ENCODE measurements at regions of chr6 and their contacts with region 1.

Region 1: DNA sequence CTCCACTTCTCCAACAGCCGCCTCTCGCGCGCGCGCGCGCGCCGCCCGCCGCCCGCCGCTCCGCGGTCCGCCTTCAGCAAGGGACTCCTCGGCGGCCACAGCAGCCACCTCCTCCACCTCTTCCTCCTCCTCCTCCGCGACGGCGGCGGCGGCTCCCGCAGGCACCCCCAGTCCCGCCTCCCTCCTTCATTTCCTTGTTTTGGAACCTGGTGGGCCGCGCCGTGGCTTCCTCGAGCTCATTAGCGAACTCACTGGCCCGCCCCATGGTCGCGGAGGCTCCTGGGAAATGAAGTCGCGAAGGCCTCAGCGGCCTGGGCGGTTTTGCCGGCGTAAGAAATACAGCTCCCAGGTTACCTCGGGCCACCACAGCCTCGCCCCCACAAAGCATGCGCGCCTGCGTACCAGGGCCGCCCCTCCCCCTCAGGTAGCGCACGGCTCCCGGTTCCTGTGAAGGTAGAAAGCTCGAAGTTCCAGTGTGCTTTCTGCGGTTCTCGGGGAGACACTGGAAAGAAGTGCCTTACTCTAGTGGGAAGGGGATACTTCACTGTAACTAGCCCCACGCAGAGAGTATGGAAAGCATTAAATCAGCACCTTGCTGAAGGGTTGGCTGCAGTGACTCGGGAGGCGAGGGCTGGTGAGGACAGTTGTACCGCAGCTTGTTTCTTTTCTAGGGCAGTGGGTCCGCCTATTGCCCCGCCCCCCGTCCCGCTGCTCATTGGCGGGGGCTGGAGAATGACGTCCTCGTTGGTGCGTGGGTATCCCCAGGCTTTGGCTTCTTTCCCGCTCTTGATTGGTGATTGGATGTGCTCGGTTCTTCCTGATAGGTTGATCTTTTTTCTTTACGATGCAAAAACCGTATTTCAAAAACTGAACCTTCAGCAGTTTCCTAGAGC is at the start of gene CDK19:
- DNase-seq: peak; percentile 94 to 99 (median 99)
- ATAC-seq: peak; percentile 87
- H3K4me3 ChIP-seq: peak within 1 kb of the TSS; percentile 97
- H3K4me3 Mint-ChIP-seq: peak within 1 kb of the TSS; percentile 94 to 100 (median 98)
- H3K27ac ChIP-seq: peak within 1 kb of the TSS; percentile 89
- H3K27ac Mint-ChIP-seq: peak within 1 kb of the TSS; percentile 89 to 100 (median 99)
- H3K4me1 ChIP-seq: peaks cover 11 to 15% of the 10 kb centered on the region in 2 donors
- H3K4me1 Mint-ChIP-seq: peaks cover 14 to 46% (median 26%) of the 10 kb centered on the region in 7 donors
- H3K27me3 ChIP-seq: no peaks in the 10 kb centered on the region
- H3K27me3 Mint-ChIP-seq: no peaks in the 10 kb centered on the region
- total RNA-seq, gene CDK19: 11.3 to 24.4 (median 21.0) TPM

Region 2: GRCh38 chr6:108848116-108848868 is 1967.2 kb before region 1 on chr6 and contains the start of gene ARMC2:
- CTCF ChIA-PET with region 1: no interaction called
- POLR2A ChIA-PET with region 1: no interaction called
- intact Hi-C with region 1: loop called in 1 of 2 experiments (anchors 5 kb)
- DNase-seq: peak; percentile 72 to 95 (median 79)
- ATAC-seq: peak; percentile 94
- H3K4me3 ChIP-seq: peak within 1 kb of the TSS; percentile 90
- H3K4me3 Mint-ChIP-seq: peak within 1 kb of the TSS; percentile 75 to 93 (median 88)
- H3K27ac ChIP-seq: peak within 1 kb of the TSS; percentile 69
- H3K27ac Mint-ChIP-seq: peak within 1 kb of the TSS; percentile 72 to 93 (median 85)
- H3K4me1 ChIP-seq: peaks cover 6 to 13% of the 10 kb centered on the region in 2 donors
- H3K4me1 Mint-ChIP-seq: peaks cover 11 to 39% (median 29%) of the 10 kb centered on the region in 7 donors
- H3K27me3 ChIP-seq: no peaks in the 10 kb centered on the region
- H3K27me3 Mint-ChIP-seq: peaks cover 0 to 36% (median 0%) of the 10 kb centered on the region in 5 donors
- total RNA-seq, gene ARMC2: 6.2 to 12.7 (median 7.9) TPM

Region 3: DNA sequence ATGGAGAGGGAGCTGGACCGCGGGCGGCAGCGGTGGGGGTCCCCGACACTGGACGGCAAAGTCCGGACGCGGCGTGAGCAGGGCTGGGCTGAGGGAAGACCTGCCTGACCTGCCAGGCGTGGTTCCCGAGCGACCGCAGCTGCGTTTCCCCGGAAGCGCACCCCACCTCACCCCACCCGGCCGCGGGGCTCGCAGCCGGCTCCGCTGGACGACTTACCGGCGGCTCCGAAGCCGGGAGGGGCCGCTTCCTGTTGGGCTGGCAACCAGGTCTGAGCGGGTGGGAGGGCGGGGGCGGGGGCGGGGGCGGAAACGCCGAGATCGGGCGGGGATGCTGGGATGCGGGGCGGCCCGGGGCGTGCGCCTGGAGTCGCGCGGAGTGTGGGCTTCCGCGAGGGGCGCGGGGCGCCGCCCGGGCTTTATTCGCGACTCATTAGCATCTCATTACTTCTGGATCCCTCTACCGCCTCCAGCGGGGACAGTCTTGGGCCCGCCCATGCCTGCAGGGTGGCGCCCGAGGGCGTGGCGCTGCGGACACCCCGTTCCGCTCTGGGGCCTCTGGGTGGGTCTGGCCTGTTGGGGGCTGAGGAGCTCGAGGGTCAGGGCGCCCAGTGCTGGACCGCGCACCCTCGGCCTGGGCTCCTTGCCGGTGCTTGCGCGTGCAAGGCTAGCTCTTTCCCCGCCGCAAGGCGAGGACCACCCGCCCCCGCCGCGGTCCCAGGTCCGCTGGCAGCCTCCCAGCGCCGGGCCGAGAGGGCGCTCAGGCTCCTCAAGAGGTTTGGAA is 1359.8 kb before region 1 on chr6 and contains the start of gene MICAL1:
- CTCF ChIA-PET with region 1: no interaction called
- POLR2A ChIA-PET with region 1: no interaction called
- intact Hi-C with region 1: loop called in 1 of 2 experiments (anchors 10 kb)
- DNase-seq: peak; percentile 55 to 79 (median 72)
- ATAC-seq: peak; percentile 82
- H3K4me3 ChIP-seq: peak within 1 kb of the TSS; percentile 81
- H3K4me3 Mint-ChIP-seq: peak within 1 kb of the TSS; percentile 95 to 99 (median 97)
- H3K27ac ChIP-seq: peak within 1 kb of the TSS; percentile 94
- H3K27ac Mint-ChIP-seq: peak within 1 kb of the TSS; percentile 83 to 99 (median 97)
- H3K4me1 ChIP-seq: peaks cover 40 to 45% of the 10 kb centered on the region in 2 donors
- H3K4me1 Mint-ChIP-seq: peaks cover 29 to 68% (median 62%) of the 10 kb centered on the region in 7 donors
- H3K27me3 ChIP-seq: no peaks in the 10 kb centered on the region
- H3K27me3 Mint-ChIP-seq: no peaks in the 10 kb centered on the region
- total RNA-seq, gene MICAL1: 61.4 to 125 (median 78.7) TPM

Region 4: GRCh38 chr6:110864824-110865223 is 49.4 kb after region 1 on chr6:
- CTCF ChIA-PET with region 1: no interaction called
- POLR2A ChIA-PET with region 1: interaction called, 11 read pairs
- intact Hi-C with region 1: no loop called
- DNase-seq: no peak
- ATAC-seq: no peak
- H3K4me3 ChIP-seq: no peak overlapping the region
- H3K4me3 Mint-ChIP-seq: no peak overlapping the region
- H3K27ac ChIP-seq: no peak overlapping the region
- H3K27ac Mint-ChIP-seq: no peak overlapping the region
- H3K4me1 ChIP-seq: peaks cover 0 to 5% of the 10 kb centered on the region in 2 donors
- H3K4me1 Mint-ChIP-seq: peaks cover 5 to 15% (median 12%) of the 10 kb centered on the region in 7 donors
- H3K27me3 ChIP-seq: no peaks in the 10 kb centered on the region
- H3K27me3 Mint-ChIP-seq: no peaks in the 10 kb centered on the region

Region 5: DNA sequence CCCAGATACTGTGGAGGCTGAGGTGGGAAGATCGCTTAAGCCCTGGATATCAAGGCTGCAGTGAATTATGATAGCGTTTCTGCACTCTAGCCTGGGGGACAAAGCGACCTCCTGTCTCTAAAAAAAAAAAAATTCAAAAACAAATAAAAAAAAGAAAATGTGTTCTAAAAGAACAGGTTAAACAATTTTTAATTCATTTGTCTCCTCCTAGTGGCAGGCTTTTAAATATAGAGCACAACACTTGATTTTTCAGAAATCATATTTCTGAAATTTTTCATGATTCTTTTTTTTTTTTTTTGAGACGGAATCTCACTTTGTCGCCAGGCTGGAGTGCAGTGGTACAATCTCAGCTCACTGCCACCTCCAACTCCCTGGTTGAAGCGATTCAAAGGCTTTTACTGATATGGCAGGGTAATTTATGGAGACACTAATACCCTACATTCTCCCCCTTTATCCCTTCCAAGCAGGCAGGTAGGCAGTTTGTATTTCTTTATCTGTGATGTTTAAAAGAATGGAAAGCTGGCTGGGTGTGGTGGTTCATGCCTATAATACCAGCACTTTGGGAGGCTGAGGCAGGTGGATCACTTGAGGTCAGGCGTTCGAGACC is 134.3 kb after region 1 on chr6:
- CTCF ChIA-PET with region 1: no interaction called
- POLR2A ChIA-PET with region 1: interaction called, 56 read pairs
- intact Hi-C with region 1: loop called (anchors 1 to 2 kb)
- DNase-seq: peak in 7 of 9 donors; percentile 17 to 64 (median 50)
- ATAC-seq: peak; percentile 52
- H3K4me3 ChIP-seq: no peak overlapping the region
- H3K4me3 Mint-ChIP-seq: no peak overlapping the region
- H3K27ac ChIP-seq: no peak overlapping the region
- H3K27ac Mint-ChIP-seq: no peak overlapping the region
- H3K4me1 ChIP-seq: no peaks in the 10 kb centered on the region
- H3K4me1 Mint-ChIP-seq: peaks cover 0 to 8% (median 0%) of the 10 kb centered on the region in 7 donors
- H3K27me3 ChIP-seq: no peaks in the 10 kb centered on the region
- H3K27me3 Mint-ChIP-seq: peaks cover 0 to 12% (median 6%) of the 10 kb centered on the region in 5 donors

Region 6: GRCh38 chr6:110981202-110981600 is 165.7 kb after region 1 on chr6:
- CTCF ChIA-PET with region 1: interaction called, 3 read pairs
- POLR2A ChIA-PET with region 1: interaction called, 12 read pairs
- intact Hi-C with region 1: loop called (anchors 1 kb)
- DNase-seq: peak in 1 of 9 donors; percentile 28
- ATAC-seq: no peak
- H3K4me3 ChIP-seq: peak overlapping the region; percentile 81
- H3K4me3 Mint-ChIP-seq: peak overlapping the region; percentile 95 to 99 (median 98)
- H3K27ac ChIP-seq: peak overlapping the region; percentile 92
- H3K27ac Mint-ChIP-seq: peak overlapping the region; percentile 96 to 100 (median 99)
- H3K4me1 ChIP-seq: peaks cover 0 to 11% of the 10 kb centered on the region in 2 donors
- H3K4me1 Mint-ChIP-seq: peaks cover 19 to 46% (median 35%) of the 10 kb centered on the region in 7 donors
- H3K27me3 ChIP-seq: no peaks in the 10 kb centered on the region
- H3K27me3 Mint-ChIP-seq: no peaks in the 10 kb centered on the region

Region 7: GRCh38 chr6:112087136-112087911 is 1271.9 kb after region 1 on chr6 and contains the starts of genes FAM229B and TUBE1:
- CTCF ChIA-PET with region 1: no interaction called
- POLR2A ChIA-PET with region 1: no interaction called
- intact Hi-C with region 1: loop called in 1 of 2 experiments (anchors 1 kb)
- DNase-seq: peak; percentile 70 to 96 (median 90)
- ATAC-seq: peak; percentile 98
- H3K4me3 ChIP-seq: peak within 1 kb of the TSS; percentile 64
- H3K4me3 Mint-ChIP-seq: no peak within 1 kb of the TSS
- H3K27ac ChIP-seq: peak within 1 kb of the TSS; percentile 87
- H3K27ac Mint-ChIP-seq: peak within 1 kb of the TSS in 1 of 9 donors; percentile 65
- H3K4me1 ChIP-seq: peaks cover 0 to 7% of the 10 kb centered on the region in 2 donors
- H3K4me1 Mint-ChIP-seq: peaks cover 0 to 18% (median 10%) of the 10 kb centered on the region in 7 donors
- H3K27me3 ChIP-seq: peaks cover 0 to 3% of the 10 kb centered on the region in 2 donors
- H3K27me3 Mint-ChIP-seq: peaks cover 0 to 37% (median 6%) of the 10 kb centered on the region in 5 donors
- total RNA-seq, gene FAM229B: 0.70 to 5.8 (median 2.0) TPM
- total RNA-seq, gene TUBE1: 19.3 to 50.0 (median 35.1) TPM

Measured in naive thymus-derived CD4-positive, alpha-beta T cell (primary cell).